B cell (primary cell): ENCODE measurements at regions of chr9 and their contacts with region 1.

Region 1: GRCh38 chr9:99478469-99479027 is 256.5 kb downstream of the SEC61B start:
- DNase-seq: no peak
- ATAC-seq: no peak
- H3K4me3 ChIP-seq: no peak overlapping the region
- H3K4me3 Mint-ChIP-seq: no peak overlapping the region
- H3K27ac ChIP-seq: no peak overlapping the region
- H3K27ac Mint-ChIP-seq: no peak overlapping the region
- H3K4me1 ChIP-seq: no peaks in the 10 kb centered on the region
- H3K4me1 Mint-ChIP-seq: no peaks in the 10 kb centered on the region
- H3K27me3 ChIP-seq: no peaks in the 10 kb centered on the region
- H3K27me3 Mint-ChIP-seq: peaks cover 5% of the 10 kb centered on the region
- CTCF ChIP-seq: no peak

Region 2: GRCh38 chr9:99488734-99489413 is 10.3 kb after region 1 on chr9:
- CTCF ChIA-PET with region 1: interaction called, 10 read pairs
- POLR2A ChIA-PET with region 1: no interaction called
- intact Hi-C with region 1: no loop called
- DNase-seq: no peak
- ATAC-seq: no peak
- H3K4me3 ChIP-seq: no peak overlapping the region
- H3K4me3 Mint-ChIP-seq: no peak overlapping the region
- H3K27ac ChIP-seq: no peak overlapping the region
- H3K27ac Mint-ChIP-seq: no peak overlapping the region
- H3K4me1 ChIP-seq: peaks cover 4 to 9% of the 10 kb centered on the region in 2 donors
- H3K4me1 Mint-ChIP-seq: peaks cover 17% of the 10 kb centered on the region
- H3K27me3 ChIP-seq: no peaks in the 10 kb centered on the region
- H3K27me3 Mint-ChIP-seq: no peaks in the 10 kb centered on the region
- CTCF ChIP-seq: no peak